ENCODE measurements at regions of chr2 and their contacts with region 1.

Region 1: DNA sequence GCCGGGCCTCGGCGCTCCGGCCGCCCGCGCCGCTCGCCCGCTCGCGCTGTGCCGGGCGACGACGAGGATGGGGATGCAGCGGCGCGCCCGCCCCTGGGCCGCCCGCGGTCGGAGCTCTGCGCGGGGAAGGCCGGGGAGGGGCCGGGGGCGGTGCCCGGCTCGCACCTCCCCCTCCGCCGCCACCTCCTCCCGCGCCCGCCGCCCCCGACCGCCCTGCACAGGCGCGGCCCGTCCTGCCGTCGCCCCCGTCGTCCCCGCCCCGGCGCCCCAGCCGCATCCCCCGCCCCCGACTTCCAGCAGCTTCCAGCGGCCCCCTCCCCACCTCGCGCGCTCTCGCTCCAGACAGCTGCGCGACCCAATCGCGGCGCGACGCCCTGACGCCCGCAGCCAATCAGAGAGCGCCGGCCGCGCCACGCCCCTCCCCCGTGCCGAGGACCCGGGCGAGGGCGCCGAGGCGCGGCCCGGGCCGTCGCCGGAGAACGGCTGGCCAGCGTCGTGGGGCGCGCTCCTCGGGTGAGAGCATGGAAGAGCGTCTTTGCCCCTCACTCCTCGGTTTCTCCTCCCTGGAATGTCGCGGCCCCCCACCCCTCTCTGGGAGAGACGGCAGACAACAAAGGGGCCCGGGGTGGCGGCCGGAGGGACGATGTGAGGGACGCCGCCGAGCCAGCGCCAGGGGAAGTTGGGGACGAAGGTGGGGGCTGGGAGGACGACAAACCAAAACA is at the start of gene MBOAT2:
- DNase-seq: peak; percentile 90 to 94 (median 90)
- ATAC-seq: peak; percentile 92 to 99 (median 98)
- H3K4me3 ChIP-seq: peak within 1 kb of the TSS; percentile 60 to 96 (median 74)
- H3K27ac ChIP-seq: peak within 1 kb of the TSS in 11 of 12 donors; percentile 47 to 87 (median 76)
- H3K4me1 ChIP-seq: peaks cover 0 to 21% (median 3%) of the 10 kb centered on the region in 12 donors
- H3K27me3 ChIP-seq: no peaks in the 10 kb centered on the region
- CTCF ChIP-seq: no peak
- POLR2A ChIP-seq: peak in 1 of 2 donors; percentile 73
- total RNA-seq, gene MBOAT2: 12.9 to 34.9 (median 17.3) TPM

Region 2: DNA sequence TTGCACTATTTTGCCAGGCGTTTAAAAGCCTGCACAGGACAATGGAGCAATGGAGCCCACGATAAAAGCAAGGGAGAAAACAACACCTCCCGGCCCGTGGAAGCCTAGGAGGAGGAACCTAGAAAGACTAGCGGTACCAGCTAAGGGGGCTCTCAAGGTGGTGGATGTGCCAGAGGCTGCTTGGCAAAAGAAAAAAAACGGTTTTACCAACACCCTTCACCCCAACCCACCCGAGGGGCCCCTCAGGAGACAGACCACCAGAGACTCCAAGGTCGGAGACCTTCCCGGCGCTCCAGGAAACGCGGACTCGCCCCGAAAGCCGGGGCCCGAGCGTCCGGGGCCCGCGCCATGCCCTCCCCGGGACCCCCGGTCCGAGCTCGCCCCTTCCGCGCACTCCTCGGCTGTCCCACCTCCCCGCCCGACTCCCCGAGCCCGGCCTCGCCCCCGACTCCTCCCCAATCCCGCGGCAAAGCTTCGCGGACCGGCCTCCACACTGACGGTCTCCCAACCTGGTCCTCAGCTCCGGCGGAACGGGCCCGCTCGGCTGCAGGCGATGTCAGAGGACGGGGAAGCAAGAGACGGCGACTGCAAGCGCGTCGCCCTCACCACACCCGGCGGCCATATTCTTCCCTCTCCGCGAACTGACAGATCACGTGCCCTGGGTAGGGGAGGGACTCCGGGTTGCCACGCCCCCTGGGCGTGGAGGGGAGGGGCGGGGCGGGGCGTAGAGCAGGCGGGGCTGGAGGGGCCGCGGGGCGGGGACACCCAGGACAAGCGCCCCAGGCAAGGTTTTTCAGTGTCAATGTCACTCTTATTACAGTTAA is 166.6 kb before region 1 on chr2 and contains the start of gene KIDINS220:
- intact Hi-C with region 1: loop called in 1 of 10 experiments (anchors 10 kb)
- DNase-seq: peak; percentile 85 to 92 (median 87)
- ATAC-seq: peak; percentile 94 to 99 (median 98)
- H3K4me3 ChIP-seq: peak within 1 kb of the TSS; percentile 71 to 99 (median 92)
- H3K27ac ChIP-seq: peak within 1 kb of the TSS; percentile 71 to 94 (median 86)
- H3K4me1 ChIP-seq: peaks cover 0 to 50% (median 36%) of the 10 kb centered on the region in 12 donors
- H3K27me3 ChIP-seq: no peaks in the 10 kb centered on the region
- CTCF ChIP-seq: no peak
- POLR2A ChIP-seq: peak in 1 of 2 donors; percentile 91
- total RNA-seq, gene KIDINS220: 56.5 to 108 (median 80.2) TPM

Region 3: GRCh38 chr2:9095690-9096351 is 92.0 kb after region 1 on chr2:
- intact Hi-C with region 1: loop called in 1 of 10 experiments (anchors 2 kb)
- DNase-seq: peak; percentile 64 to 84 (median 69)
- ATAC-seq: peak; percentile 39 to 90 (median 80)
- H3K4me3 ChIP-seq: peak overlapping the region in 7 of 12 donors; percentile 12 to 42 (median 26)
- H3K27ac ChIP-seq: peak overlapping the region in 7 of 12 donors; percentile 16 to 69 (median 48)
- H3K4me1 ChIP-seq: peaks cover 0 to 28% (median 11%) of the 10 kb centered on the region in 12 donors
- H3K27me3 ChIP-seq: no peaks in the 10 kb centered on the region
- CTCF ChIP-seq: peak in 8 of 12 donors; percentile 6 to 52 (median 26)
- POLR2A ChIP-seq: no peak

Region 4: GRCh38 chr2:9824956-9825720 is 821.4 kb after region 1 on chr2:
- intact Hi-C with region 1: loop called in 1 of 10 experiments (anchors 5 kb)
- DNase-seq: no peak
- ATAC-seq: no peak
- H3K4me3 ChIP-seq: no peak overlapping the region
- H3K27ac ChIP-seq: no peak overlapping the region
- H3K4me1 ChIP-seq: no peaks in the 10 kb centered on the region
- H3K27me3 ChIP-seq: peaks cover 0 to 3% (median 0%) of the 10 kb centered on the region in 9 donors
- CTCF ChIP-seq: no peak
- POLR2A ChIP-seq: no peak

Measured in heart left ventricle (tissue), 16 donors.